Mammary epithelial cell (primary cell): ENCODE measurements at regions of chr1 and their contacts with region 1.

Region 1: DNA sequence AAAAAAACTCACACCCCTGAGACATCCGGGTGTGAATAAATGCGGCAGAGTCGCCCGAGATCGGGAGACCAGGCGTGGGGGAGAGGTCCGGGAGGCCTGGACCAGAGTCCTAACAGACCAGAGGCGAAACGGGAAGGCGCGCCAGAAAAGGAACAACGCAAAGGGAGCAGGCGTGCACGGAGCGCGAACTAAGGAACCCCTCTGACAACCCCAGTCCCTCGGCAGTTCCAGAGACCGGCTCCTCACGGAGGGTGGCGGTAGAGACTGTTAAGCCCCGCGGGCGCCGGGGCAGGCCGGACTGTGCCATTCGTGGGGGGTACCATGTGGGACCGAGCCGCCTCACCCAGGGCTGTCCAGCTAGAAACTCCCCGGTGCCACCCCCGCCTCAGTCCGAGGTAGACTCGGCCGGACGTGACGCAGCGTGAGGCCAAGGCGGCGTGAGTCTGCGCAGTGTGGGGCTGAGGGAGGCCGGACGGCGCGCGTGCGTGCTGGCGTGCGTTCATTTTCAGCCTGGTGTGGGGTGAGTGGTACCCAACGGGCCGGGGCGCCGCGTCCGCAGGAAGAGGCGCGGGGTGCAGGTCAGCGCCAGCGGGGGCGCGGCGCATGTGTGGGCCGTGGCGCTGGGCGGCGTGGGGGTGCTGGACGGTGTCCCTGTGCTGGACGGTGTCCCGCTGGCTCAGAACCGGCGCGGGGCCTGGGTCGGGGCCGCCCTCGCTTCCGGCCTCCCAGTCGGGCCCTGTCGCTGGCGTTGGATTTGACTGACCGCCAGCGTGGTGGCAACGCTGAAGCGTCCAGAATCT is at the start of gene PARK7:
- DNase-seq: peak; percentile 100
- H3K4me3 ChIP-seq: peak within 1 kb of the TSS; percentile 89 to 92 (median 92)
- H3K27ac ChIP-seq: peak within 1 kb of the TSS; percentile 84
- H3K4me1 ChIP-seq: peaks cover 11% of the 10 kb centered on the region
- H3K27me3 ChIP-seq: no peaks in the 10 kb centered on the region
- CTCF ChIP-seq: peak; percentile 41 to 61
- total RNA-seq, gene PARK7: 106 to 264 TPM

Region 2: GRCh38 chr1:8259498-8260290 is 298.3 kb after region 1 on chr1:
- CTCF ChIA-PET with region 1: no interaction called
- dilution Hi-C with region 1: no loop called
- in situ Hi-C with region 1: no loop called
- intact Hi-C with region 1: loop called (anchors 1 kb)
- DNase-seq: peak; percentile 76
- H3K4me3 ChIP-seq: peak overlapping the region in 2 of 3 experiments; percentile 1 to 28
- H3K27ac ChIP-seq: peak overlapping the region; percentile 40
- H3K4me1 ChIP-seq: peaks cover 30% of the 10 kb centered on the region
- H3K27me3 ChIP-seq: no peaks in the 10 kb centered on the region
- CTCF ChIP-seq: no peak